Ascending aorta (tissue), 2 donors: ENCODE measurements at regions of chr18 and their contacts with region 1.

Region 1: DNA sequence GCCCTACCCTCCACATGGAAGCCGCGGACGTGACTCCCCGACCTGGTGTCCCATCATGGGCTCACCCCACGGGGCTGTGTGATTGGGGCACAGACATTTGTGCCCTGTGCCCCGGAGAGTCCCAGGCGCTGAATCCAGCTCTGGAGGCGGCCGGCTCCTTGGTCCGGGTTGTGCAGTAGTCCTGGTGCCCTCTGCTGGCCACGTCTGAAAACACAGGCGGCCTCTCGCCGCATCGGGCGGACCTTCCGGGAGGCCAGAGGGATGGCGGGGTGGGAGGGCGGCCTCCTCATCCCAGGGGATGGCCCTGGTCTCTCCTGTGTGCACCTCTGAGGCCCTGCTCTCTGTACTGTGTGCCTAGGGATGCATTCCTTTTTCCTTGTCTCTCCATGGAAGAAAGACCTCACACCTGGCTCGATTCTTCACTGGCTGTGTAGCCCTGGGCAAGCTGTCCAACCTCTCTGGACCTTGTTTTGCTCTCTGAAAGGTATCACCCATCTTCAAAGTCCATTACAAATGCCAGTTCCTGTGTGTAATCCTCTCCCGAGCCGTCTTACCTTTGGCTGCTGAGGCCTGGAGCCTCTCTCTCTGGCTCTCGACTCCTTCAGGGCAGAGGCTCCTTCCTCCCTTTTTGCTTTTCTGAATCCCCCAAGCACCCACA is 27.6 kb downstream of the CELF4 start:
- DNase-seq: peak in 1 of 2 donors; percentile 69
- H3K4me3 ChIP-seq: no peak overlapping the region
- H3K27ac ChIP-seq: no peak overlapping the region
- H3K4me1 ChIP-seq: no peaks in the 10 kb centered on the region
- H3K27me3 ChIP-seq: no peaks in the 10 kb centered on the region
- CTCF ChIP-seq: peak; percentile 30 to 87 (median 77)

Region 2: GRCh38 chr18:37341473-37342086 is 196.4 kb before region 1 on chr18:
- intact Hi-C with region 1: loop called (anchors 2 kb)
- DNase-seq: no peak
- H3K4me3 ChIP-seq: no peak overlapping the region
- H3K27ac ChIP-seq: no peak overlapping the region
- H3K4me1 ChIP-seq: no peaks in the 10 kb centered on the region
- H3K27me3 ChIP-seq: no peaks in the 10 kb centered on the region
- CTCF ChIP-seq: no peak

Region 3: GRCh38 chr18:37385846-37386778 is 151.9 kb before region 1 on chr18:
- intact Hi-C with region 1: loop called (anchors 2 kb)
- DNase-seq: no peak
- H3K4me3 ChIP-seq: no peak overlapping the region
- H3K27ac ChIP-seq: no peak overlapping the region
- H3K4me1 ChIP-seq: no peaks in the 10 kb centered on the region
- H3K27me3 ChIP-seq: no peaks in the 10 kb centered on the region
- CTCF ChIP-seq: peak; percentile 41 to 62 (median 46)

Region 4: GRCh38 chr18:38358805-38359657 is 821.0 kb after region 1 on chr18:
- intact Hi-C with region 1: no loop called
- DNase-seq: no peak
- H3K4me3 ChIP-seq: no peak overlapping the region
- H3K27ac ChIP-seq: no peak overlapping the region
- H3K4me1 ChIP-seq: no peaks in the 10 kb centered on the region
- H3K27me3 ChIP-seq: no peaks in the 10 kb centered on the region
- CTCF ChIP-seq: no peak